ENCODE measurements at regions of chr15 and their contacts with region 1.

Region 1: DNA sequence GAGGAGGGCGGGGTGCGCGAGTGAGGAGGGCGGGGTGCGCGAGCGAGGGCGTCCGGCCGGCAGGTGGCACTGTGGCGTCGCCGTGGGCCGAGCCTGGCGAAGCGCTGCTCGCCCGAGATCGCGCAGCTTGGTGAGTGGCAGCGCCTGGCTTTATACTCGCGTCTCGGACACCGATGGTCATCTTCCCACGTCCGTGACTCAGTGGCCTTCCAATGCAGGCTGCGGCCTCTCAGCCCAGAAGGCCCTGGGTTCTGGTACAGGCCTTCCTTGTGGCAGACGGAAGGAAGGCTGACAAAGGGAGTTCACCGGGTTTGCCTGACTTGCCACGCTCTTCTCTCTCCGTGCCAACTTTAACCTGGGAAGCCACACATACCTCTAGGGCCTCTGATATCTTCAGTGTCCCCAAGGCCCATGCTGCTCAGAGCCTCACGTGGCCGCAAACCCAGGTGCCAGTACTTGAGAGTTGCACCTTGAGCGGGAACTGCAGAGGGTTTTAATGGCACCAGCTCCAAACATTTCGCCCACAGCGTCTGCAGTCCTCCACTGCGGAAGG is 195.3 kb upstream of the LYSMD4 start:
- DNase-seq: peak; percentile 61 to 94 (median 85)

Region 2: GRCh38 chr15:99961011-99961441 is 32.5 kb after region 1 on chr15:
- intact Hi-C with region 1: no loop called
- DNase-seq: peak in 28 of 42 donors; percentile 19 to 69 (median 36)

Region 3: DNA sequence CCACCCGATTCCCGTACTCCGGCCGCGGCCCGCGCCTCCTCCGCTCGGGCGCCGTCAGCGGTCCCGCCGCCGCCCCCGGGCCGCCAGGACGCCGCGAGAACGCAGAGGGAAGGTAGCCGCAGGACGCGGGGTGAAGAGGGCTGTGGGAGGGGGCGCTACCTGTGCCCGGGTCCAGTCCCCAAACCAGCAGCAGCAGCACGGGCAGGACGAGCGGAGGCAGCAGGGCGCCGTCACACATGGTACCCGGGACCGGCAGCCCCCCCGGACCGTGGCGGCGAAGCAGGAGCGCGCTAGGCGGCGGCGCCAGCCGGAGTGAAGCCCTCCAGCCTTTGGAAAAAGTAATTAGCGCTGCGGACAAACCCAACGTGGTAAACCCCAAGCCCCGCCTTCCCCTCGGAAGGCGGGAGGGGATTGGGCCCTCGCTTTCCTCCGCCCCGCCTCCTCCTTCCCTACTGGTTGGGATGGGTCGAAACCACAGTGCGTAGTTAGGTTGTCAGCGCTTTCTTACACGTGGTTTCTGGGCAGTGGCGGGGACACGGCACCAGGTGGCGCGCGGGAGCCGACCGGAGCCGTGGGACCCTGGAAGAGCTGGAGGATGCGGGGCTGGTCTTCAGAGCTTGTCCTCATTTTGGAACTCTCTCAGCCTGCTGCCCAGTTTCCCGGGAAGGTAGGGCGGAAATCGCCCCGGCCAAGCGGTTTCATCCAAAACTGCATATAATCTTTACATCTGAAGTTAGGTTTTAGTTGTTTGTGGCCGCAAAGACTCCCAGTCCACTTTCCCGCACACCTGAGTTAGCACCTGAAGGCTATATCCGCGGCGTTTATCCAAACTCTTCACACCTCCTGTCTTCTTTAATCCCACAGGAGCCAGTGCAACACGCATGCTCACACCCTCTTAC is 413.4 kb after region 1 on chr15 and contains the start of gene ADAMTS17:
- intact Hi-C with region 1: loop called (anchors 5 kb)
- DNase-seq: peak; percentile 90 to 98 (median 95)